Activated naive CD4-positive, alpha-beta T cell treated with anti-CD3 and anti-CD28 coated beads for 36 hours (primary cell): ENCODE measurements at regions of chr19 and their contacts with region 1.

Region 1: GRCh38 chr19:49983645-49984229 is 22.8 kb upstream of the SIGLEC11 start:
- DNase-seq: peak; percentile 90
- H3K4me3 Mint-ChIP-seq: no peak overlapping the region
- H3K27ac Mint-ChIP-seq: no peak overlapping the region
- H3K4me1 Mint-ChIP-seq: peaks cover 9% of the 10 kb centered on the region
- H3K27me3 Mint-ChIP-seq: no peaks in the 10 kb centered on the region

Region 2: GRCh38 chr19:49718511-49718910 is 265.2 kb before region 1 on chr19:
- CTCF ChIA-PET with region 1: no interaction called
- intact Hi-C with region 1: loop called (anchors 2 kb)
- DNase-seq: no peak
- H3K4me3 Mint-ChIP-seq: peak overlapping the region; percentile 46
- H3K27ac Mint-ChIP-seq: no peak overlapping the region
- H3K4me1 Mint-ChIP-seq: peaks cover 16% of the 10 kb centered on the region
- H3K27me3 Mint-ChIP-seq: no peaks in the 10 kb centered on the region

Region 3: GRCh38 chr19:49929611-49930482 is 53.9 kb before region 1 on chr19:
- CTCF ChIA-PET with region 1: interaction called, 11 read pairs
- intact Hi-C with region 1: no loop called
- DNase-seq: peak; percentile 97
- H3K4me3 Mint-ChIP-seq: peak overlapping the region; percentile 89
- H3K27ac Mint-ChIP-seq: peak overlapping the region; percentile 100
- H3K4me1 Mint-ChIP-seq: peaks cover 60% of the 10 kb centered on the region
- H3K27me3 Mint-ChIP-seq: no peaks in the 10 kb centered on the region

Region 4: DNA sequence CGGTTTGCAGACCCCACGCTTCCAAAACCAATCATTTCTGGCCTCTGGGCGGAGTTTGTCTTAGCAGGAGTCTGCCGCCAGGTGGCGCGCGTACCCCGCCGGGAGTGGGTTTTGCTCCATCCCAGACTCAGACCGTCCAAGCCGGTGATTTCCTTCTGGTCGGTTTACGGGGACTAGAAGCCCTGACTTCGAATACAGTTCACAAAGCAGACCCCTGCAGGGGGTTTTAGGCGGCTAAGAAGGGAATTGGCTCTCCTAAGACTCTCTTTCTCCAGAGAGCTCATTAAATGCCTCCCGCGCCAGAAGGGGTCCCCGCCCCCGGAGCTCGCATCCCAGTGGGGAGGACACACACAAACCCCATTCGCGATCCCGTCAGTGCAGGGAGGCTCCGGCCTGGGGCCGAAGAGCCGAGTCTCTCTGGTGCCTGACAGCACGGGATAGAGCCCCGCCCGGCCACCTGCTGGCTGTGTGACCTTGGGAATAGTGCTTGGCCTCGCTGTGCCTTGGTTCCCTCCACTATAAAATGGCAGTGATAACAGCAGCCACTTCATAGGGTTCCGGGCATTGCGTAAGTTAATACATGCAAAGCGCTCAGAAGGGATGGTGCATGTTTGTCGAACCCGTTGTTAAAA is 45.9 kb before region 1 on chr19:
- CTCF ChIA-PET with region 1: interaction called, 39 read pairs
- intact Hi-C with region 1: loop called (anchors 1 kb)
- DNase-seq: peak; percentile 83
- H3K4me3 Mint-ChIP-seq: no peak overlapping the region
- H3K27ac Mint-ChIP-seq: no peak overlapping the region
- H3K4me1 Mint-ChIP-seq: peaks cover 14% of the 10 kb centered on the region
- H3K27me3 Mint-ChIP-seq: no peaks in the 10 kb centered on the region